Aorta (tissue), 5 donors: ENCODE measurements at regions of chr11 and their contacts with region 1.

Region 1: DNA sequence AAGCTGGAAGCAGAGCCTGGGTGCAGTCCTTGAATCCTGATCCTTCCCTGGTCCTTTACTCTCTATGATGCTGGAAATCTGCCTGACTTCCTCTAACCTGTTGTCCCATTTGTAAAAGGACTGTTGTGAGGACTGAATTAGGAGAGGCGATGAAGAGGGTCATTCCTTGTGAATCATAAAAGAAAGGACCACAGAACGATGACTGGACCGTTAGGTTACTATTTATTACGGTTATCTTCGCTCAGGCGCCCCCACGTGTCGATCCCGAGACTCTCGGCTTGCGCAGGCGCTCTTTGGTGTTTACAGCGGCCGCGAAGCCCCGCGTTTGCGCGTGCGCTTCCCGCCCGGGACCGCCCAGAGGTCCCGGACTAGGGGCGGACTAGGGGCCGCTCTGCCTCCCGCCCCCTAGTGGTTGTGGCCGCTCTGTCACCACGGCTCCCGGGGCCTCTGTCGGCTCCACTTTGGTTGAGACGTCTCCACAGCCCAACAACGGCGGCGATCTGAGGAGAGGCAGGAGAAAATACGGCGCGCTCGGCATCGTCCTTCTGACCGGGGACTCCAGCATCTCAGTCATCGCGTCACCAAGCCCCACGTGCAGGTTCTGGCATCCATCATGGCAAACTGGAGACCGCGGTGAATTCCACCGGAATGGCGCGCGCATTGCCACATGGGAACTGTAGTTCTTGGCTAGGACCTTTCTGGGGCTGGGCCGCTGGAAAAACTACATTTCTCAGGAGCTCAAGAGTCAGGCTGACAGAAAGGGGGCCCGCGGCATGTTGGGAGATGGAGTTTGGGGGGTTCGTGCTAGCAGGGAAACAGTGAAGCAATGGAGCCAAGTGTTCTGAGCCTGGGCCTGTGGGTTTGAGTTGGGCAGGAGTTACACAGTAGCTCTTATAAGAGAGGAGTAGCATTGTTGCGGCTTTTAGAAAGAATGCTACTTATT is at the start of gene STARD10:
- DNase-seq: peak; percentile 97 to 99
- ATAC-seq: peak; percentile 99
- H3K4me3 ChIP-seq: peak within 1 kb of the TSS; percentile 23 to 47
- H3K27ac ChIP-seq: peak within 1 kb of the TSS; percentile 29 to 85
- H3K4me1 ChIP-seq: peaks cover 0 to 3% of the 10 kb centered on the region in 2 donors
- H3K27me3 ChIP-seq: no peaks in the 10 kb centered on the region
- total RNA-seq, gene STARD10: 17.7 to 30.7 TPM

Region 2: GRCh38 chr11:72541257-72541974 is 252.3 kb before region 1 on chr11:
- intact Hi-C with region 1: no loop called
- DNase-seq: no peak
- ATAC-seq: no peak
- H3K4me3 ChIP-seq: no peak overlapping the region
- H3K27ac ChIP-seq: no peak overlapping the region
- H3K4me1 ChIP-seq: no peaks in the 10 kb centered on the region
- H3K27me3 ChIP-seq: peaks cover 0 to 2% of the 10 kb centered on the region in 2 donors

Region 3: GRCh38 chr11:72752088-72752914 is 41.4 kb before region 1 on chr11 and contains the start of gene ARAP1:
- intact Hi-C with region 1: loop called in 1 of 2 experiments (anchors 5 kb)
- DNase-seq: peak; percentile 82 to 91
- ATAC-seq: peak; percentile 92
- H3K4me3 ChIP-seq: peak within 1 kb of the TSS; percentile 39 to 60
- H3K27ac ChIP-seq: no peak within 1 kb of the TSS
- H3K4me1 ChIP-seq: no peaks in the 10 kb centered on the region
- H3K27me3 ChIP-seq: no peaks in the 10 kb centered on the region
- total RNA-seq, gene ARAP1: 61.9 to 166 TPM